ENCODE measurements at regions of chr10 and their contacts with region 1.

Region 1: GRCh38 chr10:73759512-73760115 is 15.4 kb downstream of the SEC24C start:
- DNase-seq: peak; percentile 68
- ATAC-seq: peak; percentile 87
- H3K4me3 Mint-ChIP-seq: peak overlapping the region; percentile 35
- H3K27ac Mint-ChIP-seq: peak overlapping the region; percentile 91
- H3K4me1 Mint-ChIP-seq: peaks cover 46% of the 10 kb centered on the region
- H3K27me3 Mint-ChIP-seq: no peaks in the 10 kb centered on the region

Region 2: DNA sequence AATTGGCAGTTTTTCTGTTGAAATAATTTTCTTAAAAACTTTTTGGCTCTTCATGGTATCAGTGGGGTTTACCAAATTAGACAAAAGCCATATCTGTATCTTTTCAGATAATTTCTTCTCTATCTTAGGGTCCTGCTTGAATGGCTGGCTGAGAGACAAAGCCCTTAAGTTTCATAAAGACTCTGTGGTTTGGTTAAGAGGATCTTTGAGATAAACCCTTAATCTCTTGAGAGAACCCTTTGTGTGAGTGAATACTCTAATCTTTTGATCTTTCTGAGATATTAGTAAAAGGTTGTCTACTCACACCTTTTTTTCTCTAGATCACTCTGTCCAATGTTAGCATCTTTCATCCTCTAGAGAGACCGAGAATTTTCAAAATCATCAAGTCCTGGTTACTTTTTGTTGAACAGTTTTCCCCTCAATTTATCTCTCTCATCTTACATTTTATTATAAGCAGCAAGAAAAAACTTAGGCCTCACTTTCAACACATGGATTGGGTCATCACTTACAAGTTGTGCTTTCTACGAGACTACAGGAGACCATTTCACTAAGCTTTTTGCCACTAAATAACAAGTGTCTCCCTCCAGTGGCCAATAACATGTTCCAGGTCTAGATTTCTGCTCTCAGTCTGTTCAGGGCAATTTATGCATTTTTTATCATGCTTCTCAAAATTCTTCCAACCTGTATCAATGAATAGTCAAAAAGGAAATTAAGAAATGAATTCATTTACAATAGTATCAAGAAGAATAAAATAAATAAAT is 541.0 kb before region 1 on chr10:
- CTCF ChIA-PET with region 1: no interaction called
- POLR2A ChIA-PET with region 1: no interaction called
- DNase-seq: no peak
- ATAC-seq: no peak
- H3K4me3 Mint-ChIP-seq: no peak overlapping the region
- H3K27ac Mint-ChIP-seq: no peak overlapping the region
- H3K4me1 Mint-ChIP-seq: no peaks in the 10 kb centered on the region
- H3K27me3 Mint-ChIP-seq: no peaks in the 10 kb centered on the region

Region 3: GRCh38 chr10:73591935-73592699 is 167.5 kb before region 1 on chr10:
- CTCF ChIA-PET with region 1: no interaction called
- POLR2A ChIA-PET with region 1: no interaction called
- DNase-seq: peak; percentile 36
- ATAC-seq: peak; percentile 51
- H3K4me3 Mint-ChIP-seq: peak overlapping the region; percentile 39
- H3K27ac Mint-ChIP-seq: no peak overlapping the region
- H3K4me1 Mint-ChIP-seq: peaks cover 18% of the 10 kb centered on the region
- H3K27me3 Mint-ChIP-seq: no peaks in the 10 kb centered on the region

Region 4: DNA sequence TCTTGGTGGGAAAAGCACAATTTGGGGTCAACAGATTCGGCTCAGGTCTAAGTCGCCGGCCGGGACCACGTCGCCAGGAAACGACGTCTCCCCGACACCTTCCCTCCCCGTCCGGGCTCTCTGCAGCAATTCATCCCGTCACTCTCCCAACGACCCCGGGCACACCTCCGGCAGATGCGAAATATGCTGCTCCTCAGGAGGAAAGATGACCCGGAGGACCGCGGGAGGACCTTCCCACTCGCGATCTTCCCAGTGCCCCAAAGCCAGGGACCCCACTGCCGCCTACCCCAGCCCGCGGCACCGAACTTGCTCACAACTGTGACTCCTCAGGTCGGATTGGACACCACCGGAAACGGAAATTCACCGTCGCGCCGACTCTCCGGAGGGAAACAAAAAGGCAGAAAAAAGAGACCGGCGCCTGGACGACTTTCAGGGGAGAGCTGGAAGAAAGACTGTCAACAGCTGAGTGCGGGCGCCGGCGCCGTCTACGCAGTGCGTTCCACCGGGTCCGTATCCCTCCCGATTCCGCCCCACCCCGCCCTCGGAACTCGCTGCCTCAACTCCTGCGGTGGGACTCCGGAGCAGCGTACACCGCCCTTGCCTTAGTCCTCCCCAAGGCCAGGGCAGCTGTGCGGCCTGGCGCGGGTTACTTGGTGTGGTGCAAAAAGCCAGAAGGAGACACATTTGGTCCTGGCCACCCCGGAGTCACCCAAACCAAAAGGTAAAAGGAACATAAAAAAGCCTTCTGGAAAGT is 29.3 kb before region 1 on chr10:
- CTCF ChIA-PET with region 1: no interaction called
- POLR2A ChIA-PET with region 1: interaction called, 11 read pairs
- DNase-seq: peak; percentile 94
- ATAC-seq: peak; percentile 93
- H3K4me3 Mint-ChIP-seq: peak overlapping the region; percentile 92
- H3K27ac Mint-ChIP-seq: peak overlapping the region; percentile 97
- H3K4me1 Mint-ChIP-seq: peaks cover 16% of the 10 kb centered on the region
- H3K27me3 Mint-ChIP-seq: no peaks in the 10 kb centered on the region

Region 5: DNA sequence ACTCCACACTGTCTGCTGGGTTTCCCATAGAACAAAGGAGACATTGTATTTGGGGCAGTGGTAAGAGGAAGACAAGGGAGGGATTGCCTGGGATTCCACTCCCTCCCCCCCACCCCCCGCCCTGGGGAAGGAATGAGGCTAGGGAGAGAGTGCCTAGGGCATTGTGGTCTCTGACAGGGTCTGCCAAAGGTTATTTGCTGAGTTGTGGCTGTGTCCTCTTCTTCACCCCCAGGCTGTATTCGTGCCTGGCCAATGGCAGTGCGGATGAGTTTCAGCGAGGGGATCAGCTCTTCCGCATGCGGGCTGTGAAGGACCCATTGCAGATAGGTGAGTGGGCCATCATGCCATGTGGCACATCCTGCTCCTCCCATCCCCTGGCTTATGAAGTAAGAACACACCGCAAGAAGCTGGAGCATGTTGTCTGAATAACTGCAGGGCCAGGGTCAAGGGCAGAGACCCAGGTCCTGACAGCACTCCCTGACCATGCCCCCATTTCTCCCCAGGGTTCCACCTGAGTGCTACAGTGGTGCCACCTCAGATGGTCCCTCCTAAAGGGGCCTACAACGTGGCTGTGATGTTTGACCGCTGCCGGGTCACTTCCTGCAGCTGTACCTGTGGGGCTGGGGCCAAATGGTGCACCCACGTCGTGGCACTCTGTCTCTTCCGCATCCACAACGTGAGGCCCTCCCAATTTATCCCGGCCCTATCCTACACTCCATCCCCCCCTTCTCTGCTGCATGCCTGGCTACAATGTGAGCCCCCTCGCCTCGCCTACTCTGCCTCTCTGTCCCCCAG is 29.4 kb after region 1 on chr10:
- CTCF ChIA-PET with region 1: no interaction called
- POLR2A ChIA-PET with region 1: no interaction called
- DNase-seq: no peak
- ATAC-seq: no peak
- H3K4me3 Mint-ChIP-seq: no peak overlapping the region
- H3K27ac Mint-ChIP-seq: no peak overlapping the region
- H3K4me1 Mint-ChIP-seq: peaks cover 28% of the 10 kb centered on the region
- H3K27me3 Mint-ChIP-seq: no peaks in the 10 kb centered on the region

Region 6: GRCh38 chr10:73940634-73941221 is 181.1 kb after region 1 on chr10:
- CTCF ChIA-PET with region 1: no interaction called
- POLR2A ChIA-PET with region 1: no interaction called
- DNase-seq: peak; percentile 89
- ATAC-seq: peak; percentile 100
- H3K4me3 Mint-ChIP-seq: peak overlapping the region; percentile 23
- H3K27ac Mint-ChIP-seq: peak overlapping the region; percentile 51
- H3K4me1 Mint-ChIP-seq: peaks cover 21% of the 10 kb centered on the region
- H3K27me3 Mint-ChIP-seq: peaks cover 18% of the 10 kb centered on the region

Measured in activated CD8-positive, alpha-beta T cell treated with anti-CD3 and anti-CD28 coated beads, Interleukin-2, amount 10 ng/mL, durations not matched to agents 7 days and 5 days (primary cell).